SK-N-SH (cell line): ENCODE measurements at regions of chr15 and their contacts with region 1.

Region 1: DNA sequence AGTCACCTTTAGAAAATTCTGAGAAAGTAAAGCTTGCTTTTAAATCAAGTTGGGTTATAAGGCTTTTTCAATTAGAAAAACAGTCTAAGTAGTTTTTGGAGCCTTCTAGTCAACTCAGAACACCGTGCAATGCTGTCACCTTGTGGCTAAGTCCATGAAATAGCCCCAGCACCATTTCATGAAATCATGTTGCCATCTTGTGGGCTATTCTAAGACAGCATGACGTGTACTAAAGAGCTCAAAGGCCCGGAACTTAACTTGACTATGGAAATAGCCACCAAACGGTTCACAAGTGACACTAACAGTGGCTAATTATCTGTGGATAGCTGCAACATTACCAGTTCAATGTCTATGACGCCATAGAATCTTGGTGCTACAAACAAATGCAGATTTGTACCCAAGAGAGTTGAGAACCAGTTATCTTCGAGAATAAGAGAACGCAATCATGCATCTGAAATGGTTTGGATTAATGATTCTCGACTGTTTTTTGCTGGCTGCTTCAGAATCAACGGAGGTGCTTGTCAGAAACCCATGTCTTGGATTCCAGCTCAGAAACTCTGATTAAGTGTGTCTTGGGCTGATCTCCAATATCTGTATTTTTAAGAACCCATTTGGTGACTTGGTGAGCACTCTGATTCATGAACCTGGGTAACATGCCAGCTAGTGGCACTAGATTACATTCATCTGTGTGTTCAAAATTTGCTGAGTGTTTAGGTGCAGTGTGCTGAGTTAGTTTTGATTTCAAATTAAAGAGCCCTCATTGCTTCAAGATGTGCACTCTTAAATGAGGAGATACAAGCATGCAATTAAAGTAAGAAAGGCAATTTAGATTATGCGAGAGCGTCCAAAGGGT is 111.2 kb upstream of the MCTP2 start:
- DNase-seq: peak; percentile 62
- H3K4me3 ChIP-seq: peak overlapping the region in 1 of 2 experiments; percentile 18; a peak in 1 of 4 replicates
- H3K27ac ChIP-seq: peak overlapping the region in 1 of 2 experiments; percentile 17; a peak in 1 of 4 replicates
- H3K4me1 ChIP-seq: peaks cover 0 to 10% of the 10 kb centered on the region in 2 experiments; a peak in 1 of 4 replicates
- H3K27me3 ChIP-seq: no peaks in the 10 kb centered on the region
- CTCF ChIP-seq: peak; percentile 100
- EP300 ChIP-seq: no peak
- RAD21 ChIP-seq: peak; percentile 100

Region 2: GRCh38 chr15:93030430-93031105 is 1089.6 kb before region 1 on chr15:
- CTCF ChIA-PET with region 1: interaction called, 191 read pairs
- POLR2A ChIA-PET with region 1: no interaction called
- DNase-seq: peak; percentile 91
- H3K4me3 ChIP-seq: peak overlapping the region in 1 of 2 experiments; percentile 1; a peak in 1 of 4 replicates
- H3K27ac ChIP-seq: no peak overlapping the region; a peak in 1 of 4 replicates
- H3K4me1 ChIP-seq: peaks cover 19 to 20% of the 10 kb centered on the region in 2 experiments; a peak in 3 of 4 replicates
- H3K27me3 ChIP-seq: no peaks in the 10 kb centered on the region
- CTCF ChIP-seq: peak; percentile 84
- EP300 ChIP-seq: no peak
- RAD21 ChIP-seq: peak; percentile 91

Region 3: DNA sequence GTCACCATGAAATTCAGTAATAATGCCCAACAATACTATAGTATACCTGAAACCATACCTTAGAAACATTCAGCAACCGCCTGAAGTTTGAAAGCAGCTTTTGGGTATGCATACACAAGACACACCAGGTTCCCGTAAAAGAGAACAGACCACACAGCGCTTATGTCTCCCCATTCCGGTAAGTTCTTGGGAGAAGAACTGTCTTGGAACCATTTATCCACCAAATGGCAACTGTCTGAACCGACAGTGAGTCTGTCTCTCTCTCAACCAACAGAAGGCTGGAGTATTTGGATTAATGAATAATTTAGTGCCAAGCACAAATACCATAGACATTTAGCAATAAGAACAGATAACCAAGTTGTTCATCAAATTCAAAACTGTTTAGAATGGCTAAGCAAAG is 1038.8 kb before region 1 on chr15:
- CTCF ChIA-PET with region 1: interaction called, 25 read pairs
- POLR2A ChIA-PET with region 1: no interaction called
- DNase-seq: no peak
- H3K4me3 ChIP-seq: no peak overlapping the region
- H3K27ac ChIP-seq: no peak overlapping the region
- H3K4me1 ChIP-seq: no peaks in the 10 kb centered on the region
- H3K27me3 ChIP-seq: peaks cover 17% of the 10 kb centered on the region
- CTCF ChIP-seq: no peak
- EP300 ChIP-seq: no peak
- RAD21 ChIP-seq: no peak

Region 4: DNA sequence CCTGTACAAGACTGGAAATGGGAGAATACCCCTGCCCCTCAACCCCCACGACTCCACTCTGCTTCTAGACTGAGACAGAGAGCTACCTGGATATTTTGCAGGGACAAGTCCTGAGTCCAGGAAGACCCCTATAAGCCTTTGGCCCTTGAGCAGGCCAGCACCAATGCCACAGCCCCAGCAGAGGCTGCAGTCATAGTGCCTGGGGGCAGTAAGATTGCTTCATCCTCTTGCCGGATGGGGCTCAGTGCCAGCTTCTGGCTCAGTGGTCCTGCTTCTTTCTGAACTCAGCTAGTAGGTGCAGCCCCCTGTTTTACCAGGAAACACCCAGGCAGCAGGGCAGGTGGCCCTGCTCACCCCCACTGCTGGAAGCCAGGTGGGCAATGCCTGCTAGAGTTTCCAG is 307.1 kb before region 1 on chr15:
- CTCF ChIA-PET with region 1: no interaction called
- POLR2A ChIA-PET with region 1: no interaction called
- DNase-seq: no peak
- H3K4me3 ChIP-seq: no peak overlapping the region
- H3K27ac ChIP-seq: no peak overlapping the region
- H3K4me1 ChIP-seq: no peaks in the 10 kb centered on the region
- H3K27me3 ChIP-seq: no peaks in the 10 kb centered on the region
- CTCF ChIP-seq: no peak
- EP300 ChIP-seq: no peak
- RAD21 ChIP-seq: no peak

Region 5: GRCh38 chr15:93989440-93989998 is 130.6 kb before region 1 on chr15:
- CTCF ChIA-PET with region 1: interaction called, 17 read pairs
- POLR2A ChIA-PET with region 1: no interaction called
- DNase-seq: no peak
- H3K4me3 ChIP-seq: no peak overlapping the region
- H3K27ac ChIP-seq: no peak overlapping the region
- H3K4me1 ChIP-seq: no peaks in the 10 kb centered on the region; a peak in 1 of 4 replicates
- H3K27me3 ChIP-seq: no peaks in the 10 kb centered on the region
- CTCF ChIP-seq: no peak
- EP300 ChIP-seq: no peak
- RAD21 ChIP-seq: no peak

Region 6: GRCh38 chr15:94097552-94097951 is 22.6 kb before region 1 on chr15:
- CTCF ChIA-PET with region 1: interaction called, 17 read pairs
- POLR2A ChIA-PET with region 1: no interaction called
- DNase-seq: no peak
- H3K4me3 ChIP-seq: no peak overlapping the region
- H3K27ac ChIP-seq: peak overlapping the region in 1 of 2 experiments; percentile 60; a peak in 1 of 4 replicates
- H3K4me1 ChIP-seq: 0 out of 4 replicates have a peak, but pooled peaks cover 0 to 8% of the 10 kb centered on the region in 2 experiments
- H3K27me3 ChIP-seq: no peaks in the 10 kb centered on the region
- CTCF ChIP-seq: no peak
- EP300 ChIP-seq: no peak
- RAD21 ChIP-seq: no peak